A549 (cell line): ENCODE measurements at regions of chr12 and their contacts with region 1.

Region 1: DNA sequence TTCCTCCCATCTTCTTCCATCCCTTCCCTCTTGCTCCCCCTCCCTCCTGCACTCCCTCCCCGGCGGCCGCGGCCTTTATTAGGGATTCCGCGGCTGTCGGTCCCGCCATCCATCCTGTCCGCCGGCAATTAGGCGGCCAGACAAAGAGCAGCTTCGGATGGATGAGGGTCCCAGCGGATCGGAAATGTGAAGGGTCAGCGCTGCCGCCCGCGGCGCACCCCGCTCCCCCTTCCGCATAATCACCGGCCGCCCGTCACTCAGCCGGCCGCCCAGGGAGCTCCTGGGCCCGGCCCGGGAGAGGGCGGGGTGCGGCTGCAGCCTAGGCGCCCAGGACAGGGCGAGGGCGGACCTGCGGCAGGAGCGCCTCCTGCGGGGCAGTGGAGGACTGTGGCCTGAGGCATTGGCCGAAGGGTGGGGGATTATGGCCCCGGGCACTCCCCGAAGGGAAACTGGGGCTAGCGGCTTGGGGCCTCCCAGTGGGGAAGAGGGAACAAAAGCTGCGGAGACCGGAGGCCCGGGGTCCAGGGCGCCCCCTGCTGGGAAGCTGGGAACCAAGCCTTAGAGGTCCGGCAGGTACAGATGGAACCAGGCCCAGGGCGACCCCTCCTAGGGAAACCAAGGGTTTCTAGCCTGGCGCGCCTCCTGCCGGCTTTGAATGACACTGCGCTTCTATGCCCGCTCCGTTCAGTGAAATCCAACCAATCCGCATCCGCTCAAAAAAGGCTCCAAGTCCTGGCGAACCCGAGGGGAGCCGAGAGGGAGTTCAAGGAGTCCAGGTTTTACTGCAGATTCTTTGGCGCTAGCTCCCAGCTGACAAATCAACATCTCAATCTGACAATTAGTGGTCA is 4.4 kb upstream of the DNAJC22 start:
- DNase-seq: peak; percentile 88 to 95
- ATAC-seq: peak; percentile 60 to 83
- H3K4me3 ChIP-seq: peak overlapping the region; percentile 48
- H3K27ac ChIP-seq: peak overlapping the region; percentile 72 to 86
- H3K4me1 ChIP-seq: peaks cover 41% of the 10 kb centered on the region
- CTCF ChIP-seq: peak; percentile 98
- EP300 ChIP-seq: no peak
- POLR2A ChIP-seq: no peak
- RAD21 ChIP-seq: peak; percentile 54 to 66

Region 2: GRCh38 chr12:48681738-48682532 is 660.4 kb before region 1 on chr12 and contains the start of gene KANSL2:
- CTCF ChIA-PET with region 1: no interaction called
- POLR2A ChIA-PET with region 1: no interaction called
- DNase-seq: peak; percentile 99
- ATAC-seq: peak; percentile 98
- H3K4me3 ChIP-seq: peak within 1 kb of the TSS; percentile 58
- H3K27ac ChIP-seq: peak within 1 kb of the TSS; percentile 93 to 98
- H3K4me1 ChIP-seq: peaks cover 32% of the 10 kb centered on the region
- CTCF ChIP-seq: no peak
- EP300 ChIP-seq: no peak
- POLR2A ChIP-seq: peak; percentile 98
- RAD21 ChIP-seq: no peak
- polyA plus RNA-seq, gene KANSL2: 59.4 and 62.8 TPM in 2 replicates

Region 3: GRCh38 chr12:48881686-48882314 is 460.5 kb before region 1 on chr12:
- CTCF ChIA-PET with region 1: no interaction called
- POLR2A ChIA-PET with region 1: no interaction called
- DNase-seq: no peak
- ATAC-seq: peak; percentile 22 to 38; a peak in 4 of 6 replicates
- H3K4me3 ChIP-seq: peak overlapping the region; percentile 29
- H3K27ac ChIP-seq: peak overlapping the region; percentile 88 to 90
- H3K4me1 ChIP-seq: peaks cover 54% of the 10 kb centered on the region
- CTCF ChIP-seq: no peak
- EP300 ChIP-seq: no peak
- POLR2A ChIP-seq: no peak
- RAD21 ChIP-seq: no peak

Region 4: DNA sequence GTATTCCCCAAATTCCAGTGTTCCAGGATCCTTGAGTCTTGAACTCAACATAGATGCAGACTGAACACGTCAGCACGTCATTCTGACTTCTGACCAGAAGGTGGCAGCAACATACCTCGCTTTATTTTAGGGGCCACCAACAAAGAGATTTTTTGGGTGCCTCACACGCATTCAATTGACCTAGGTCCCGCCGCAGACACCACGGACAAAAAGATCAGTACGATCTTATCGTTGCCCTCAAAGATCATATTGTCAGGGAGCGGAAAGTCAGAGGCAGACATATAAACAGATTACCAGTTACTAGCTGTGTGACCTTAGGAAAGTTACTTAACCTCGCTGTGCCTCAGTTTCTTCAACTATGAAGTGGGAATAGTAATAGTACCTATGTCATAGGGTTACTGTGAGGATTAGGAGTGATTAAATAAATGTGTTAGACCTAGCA is 53.9 kb before region 1 on chr12:
- CTCF ChIA-PET with region 1: interaction called, 164 read pairs
- POLR2A ChIA-PET with region 1: no interaction called
- DNase-seq: peak; percentile 66 to 70
- ATAC-seq: peak; percentile 47 to 66; a peak in 4 of 6 replicates
- H3K4me3 ChIP-seq: no peak overlapping the region
- H3K27ac ChIP-seq: no peak overlapping the region
- H3K4me1 ChIP-seq: 0 out of 3 replicates have a peak, but pooled peaks cover 12% of the 10 kb centered on the region
- CTCF ChIP-seq: peak; percentile 96
- EP300 ChIP-seq: no peak
- POLR2A ChIP-seq: no peak
- RAD21 ChIP-seq: peak; percentile 89 to 91

Region 5: GRCh38 chr12:49322708-49323523 is 19.4 kb before region 1 on chr12 and contains the start of gene TROAP:
- CTCF ChIA-PET with region 1: interaction called, 104 read pairs
- POLR2A ChIA-PET with region 1: interaction called, 17 read pairs
- DNase-seq: peak; percentile 98 to 99
- ATAC-seq: peak; percentile 99 to 100
- H3K4me3 ChIP-seq: peak within 1 kb of the TSS; percentile 62
- H3K27ac ChIP-seq: peak within 1 kb of the TSS; percentile 80 to 91
- H3K4me1 ChIP-seq: peaks cover 12% of the 10 kb centered on the region; the same call in 2 of the 3 replicates
- CTCF ChIP-seq: no peak
- EP300 ChIP-seq: no peak
- POLR2A ChIP-seq: peak; percentile 94
- RAD21 ChIP-seq: no peak
- polyA plus RNA-seq, gene TROAP: 50.0 and 56.4 TPM in 2 replicates

Region 6: DNA sequence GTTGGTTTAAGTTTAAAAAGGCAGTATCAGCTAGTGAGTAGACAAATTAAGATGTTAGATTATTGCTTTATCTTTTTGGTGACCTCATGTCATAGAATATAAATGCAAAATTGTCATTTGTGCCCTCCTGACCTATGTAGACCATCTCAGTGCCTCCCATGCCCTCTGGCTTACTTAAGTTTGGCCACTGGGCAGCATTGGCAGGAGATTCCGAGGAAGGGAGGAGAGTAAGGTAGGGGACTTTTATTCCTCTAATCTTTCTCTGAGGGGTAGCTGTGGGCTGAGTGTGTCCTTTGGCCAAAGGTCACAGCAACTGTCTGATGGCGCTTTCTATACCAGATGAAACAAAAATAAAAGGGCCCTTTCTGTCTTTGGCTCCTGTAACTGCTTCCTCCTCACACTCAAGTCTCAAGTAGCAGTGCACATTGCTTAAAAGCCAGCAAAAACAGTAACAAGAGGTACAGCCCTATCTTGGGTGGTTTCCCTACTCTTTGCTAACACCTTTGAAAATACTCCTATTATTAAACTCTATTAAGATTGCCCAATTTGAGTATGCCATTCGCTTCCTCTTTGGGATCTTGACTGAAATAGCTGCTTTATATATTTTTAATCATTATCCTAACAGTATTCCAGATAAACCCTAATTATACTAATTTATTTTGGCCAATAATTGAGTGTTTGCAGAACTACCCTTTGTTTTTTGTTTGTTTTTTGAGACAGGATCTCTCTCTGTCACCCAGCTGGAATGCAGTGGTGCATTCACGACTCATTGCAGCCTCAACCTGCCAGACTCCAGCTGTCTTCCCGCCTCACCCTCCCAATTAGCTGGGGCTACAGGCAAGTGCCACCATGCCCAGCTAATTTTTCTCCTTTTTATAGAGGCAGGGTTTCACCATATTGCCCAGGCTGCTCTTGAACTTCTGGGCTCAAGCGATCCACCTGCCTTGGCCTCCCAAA is 140.1 kb after region 1 on chr12:
- CTCF ChIA-PET with region 1: interaction called, 11 read pairs
- POLR2A ChIA-PET with region 1: no interaction called
- DNase-seq: no peak
- ATAC-seq: peak; percentile 35 to 48; a peak in 3 of 6 replicates
- H3K4me3 ChIP-seq: no peak overlapping the region
- H3K27ac ChIP-seq: peak overlapping the region; percentile 6 to 48; a peak in 4 of 6 replicates
- H3K4me1 ChIP-seq: peaks cover 28% of the 10 kb centered on the region
- CTCF ChIP-seq: no peak
- EP300 ChIP-seq: no peak
- POLR2A ChIP-seq: no peak
- RAD21 ChIP-seq: no peak

Region 7: DNA sequence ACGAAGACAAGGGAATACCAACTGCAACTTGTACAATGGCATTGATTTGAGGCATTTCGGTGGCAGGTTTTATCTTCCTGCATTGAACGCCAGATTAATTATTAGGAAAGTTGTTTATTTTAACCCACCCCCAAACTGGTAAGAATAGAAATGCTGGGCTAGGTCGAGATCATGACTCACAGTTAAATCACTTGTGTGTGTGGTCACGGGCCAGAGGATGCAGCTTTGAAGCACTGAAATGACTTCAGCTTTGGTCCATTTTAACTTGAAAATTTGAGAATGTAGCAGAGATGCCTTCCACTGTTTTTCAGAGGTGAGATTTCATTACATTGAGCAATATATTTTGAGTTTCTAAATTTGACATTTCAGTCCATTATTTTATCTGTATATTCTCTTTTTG is 173.0 kb after region 1 on chr12:
- CTCF ChIA-PET with region 1: interaction called, 201 read pairs
- POLR2A ChIA-PET with region 1: no interaction called
- DNase-seq: peak; percentile 47 to 64
- ATAC-seq: peak in 1 of 2 experiments; percentile 68; a peak in 3 of 6 replicates
- H3K4me3 ChIP-seq: no peak overlapping the region
- H3K27ac ChIP-seq: peak overlapping the region; percentile 70 to 87
- H3K4me1 ChIP-seq: peaks cover 81% of the 10 kb centered on the region
- CTCF ChIP-seq: no peak
- EP300 ChIP-seq: peak; percentile 23 to 27; a peak in 1 of 5 replicates
- POLR2A ChIP-seq: no peak
- RAD21 ChIP-seq: 0 out of 5 replicates have a peak, but pooled peaks of 1 of the 2 experiments have one; percentile 30

Region 8: DNA sequence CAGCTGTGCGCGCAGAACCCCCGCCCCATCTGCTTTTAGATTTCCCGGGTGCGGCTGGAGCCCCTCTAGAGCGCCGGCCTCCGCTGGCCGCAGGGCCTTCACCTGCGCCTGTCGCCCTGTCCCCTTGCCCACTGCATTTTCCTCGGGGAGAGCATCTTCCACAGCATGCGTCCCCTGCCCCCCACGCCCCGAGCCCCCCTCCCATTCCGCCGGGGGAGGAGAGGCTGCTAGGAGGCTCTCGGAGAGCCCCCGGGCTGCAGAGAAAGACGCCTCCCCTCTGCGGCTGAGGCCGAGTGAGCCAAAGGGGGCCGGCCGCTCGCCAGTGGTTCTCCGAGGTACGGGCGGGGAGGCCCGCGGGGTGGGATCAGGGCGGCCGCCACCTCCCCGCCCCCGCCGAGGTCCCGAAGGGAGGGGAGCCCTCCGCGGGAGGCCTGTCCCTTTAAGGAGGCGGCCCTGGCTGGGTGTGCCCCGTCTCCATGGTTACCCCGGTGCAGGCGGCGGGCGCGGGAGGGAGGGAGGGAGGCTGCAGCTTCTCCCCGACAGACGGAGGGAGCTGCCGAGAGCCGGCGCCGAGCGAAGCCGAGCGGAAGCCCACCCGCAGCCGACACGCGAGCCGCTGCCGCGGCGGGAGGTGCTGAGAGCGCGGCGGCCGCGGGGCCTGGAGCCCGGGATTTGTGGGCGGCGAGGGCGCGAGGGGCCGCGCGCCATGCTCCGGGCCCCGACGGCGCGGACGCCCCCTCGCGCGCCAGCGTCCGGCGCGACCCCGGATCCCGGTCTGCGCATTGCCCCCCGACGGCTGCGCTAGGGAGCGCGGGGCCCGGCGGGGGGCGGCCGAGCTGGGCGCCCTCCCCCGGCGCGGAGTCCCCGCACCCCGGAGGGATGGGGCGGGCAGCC is 196.5 kb after region 1 on chr12 and contains the start of gene KCNH3:
- CTCF ChIA-PET with region 1: interaction called, 19 read pairs
- POLR2A ChIA-PET with region 1: no interaction called
- DNase-seq: peak; percentile 71 to 88
- ATAC-seq: peak; percentile 72 to 77
- H3K4me3 ChIP-seq: peak within 1 kb of the TSS; percentile 76
- H3K27ac ChIP-seq: peak within 1 kb of the TSS; percentile 65 to 91
- H3K4me1 ChIP-seq: peaks cover 32% of the 10 kb centered on the region
- CTCF ChIP-seq: no peak
- EP300 ChIP-seq: no peak
- POLR2A ChIP-seq: no peak
- RAD21 ChIP-seq: no peak
- polyA plus RNA-seq, gene KCNH3: 1.0 and 1.2 TPM in 2 replicates

Region 9: DNA sequence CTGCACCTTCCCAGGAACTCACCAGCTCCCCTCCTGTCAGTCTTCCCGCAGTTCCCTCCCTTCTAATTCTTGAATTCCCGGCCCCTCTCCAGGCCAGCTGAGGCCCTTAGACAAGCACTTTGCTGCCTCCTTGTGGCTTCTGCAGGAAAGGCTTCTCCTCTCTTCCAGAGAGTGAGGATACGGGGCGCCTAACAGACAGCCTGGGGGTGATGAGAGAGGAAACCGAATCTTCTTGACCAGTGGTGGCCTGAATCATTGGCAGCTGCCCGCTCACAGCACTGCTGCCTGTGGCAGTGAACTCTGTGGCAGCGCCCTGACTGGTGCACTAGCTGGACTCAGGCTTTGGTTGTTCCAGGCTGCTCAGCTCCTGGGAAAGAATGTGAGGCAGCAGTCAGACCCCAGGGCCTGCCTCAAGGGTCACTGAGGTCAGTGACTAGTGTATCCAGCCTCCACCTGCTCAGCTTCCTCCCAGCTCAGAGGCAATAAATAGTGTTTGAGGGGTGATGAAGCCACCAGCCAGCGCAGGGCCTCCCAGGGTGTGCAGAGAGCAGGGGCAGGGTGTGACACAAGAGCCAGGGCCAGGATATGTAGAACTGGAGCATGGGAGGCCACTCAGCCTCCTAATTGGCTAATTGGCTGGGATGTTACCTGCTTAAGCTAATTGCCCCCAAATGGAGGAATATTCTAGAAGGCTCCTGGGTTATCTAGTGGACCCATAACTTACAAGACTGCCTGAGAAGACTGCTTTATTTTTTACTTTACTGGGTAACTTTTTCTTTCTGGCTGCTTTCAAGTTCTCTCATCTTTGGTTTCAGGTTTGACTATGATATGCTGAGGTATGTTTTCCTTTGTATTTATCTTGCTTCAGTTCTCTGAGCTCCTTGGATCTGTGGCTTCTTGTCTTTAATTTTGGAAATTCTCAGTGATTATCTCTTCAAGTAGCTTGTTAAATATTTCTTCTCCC is 238.6 kb after region 1 on chr12:
- CTCF ChIA-PET with region 1: interaction called, 13 read pairs
- POLR2A ChIA-PET with region 1: no interaction called
- DNase-seq: peak; percentile 83 to 86
- ATAC-seq: peak; percentile 95 to 98
- H3K4me3 ChIP-seq: no peak overlapping the region
- H3K27ac ChIP-seq: 0 out of 6 replicates have a peak overlapping the region, but pooled peaks of 1 of the 2 experiments have one; percentile 22
- H3K4me1 ChIP-seq: peaks cover 16% of the 10 kb centered on the region; the same call in 2 of the 3 replicates
- CTCF ChIP-seq: peak; percentile 81
- EP300 ChIP-seq: no peak
- POLR2A ChIP-seq: no peak
- RAD21 ChIP-seq: peak; percentile 83 to 90